ENCODE measurements at regions of chr1 and their contacts with region 1.

Region 1: DNA sequence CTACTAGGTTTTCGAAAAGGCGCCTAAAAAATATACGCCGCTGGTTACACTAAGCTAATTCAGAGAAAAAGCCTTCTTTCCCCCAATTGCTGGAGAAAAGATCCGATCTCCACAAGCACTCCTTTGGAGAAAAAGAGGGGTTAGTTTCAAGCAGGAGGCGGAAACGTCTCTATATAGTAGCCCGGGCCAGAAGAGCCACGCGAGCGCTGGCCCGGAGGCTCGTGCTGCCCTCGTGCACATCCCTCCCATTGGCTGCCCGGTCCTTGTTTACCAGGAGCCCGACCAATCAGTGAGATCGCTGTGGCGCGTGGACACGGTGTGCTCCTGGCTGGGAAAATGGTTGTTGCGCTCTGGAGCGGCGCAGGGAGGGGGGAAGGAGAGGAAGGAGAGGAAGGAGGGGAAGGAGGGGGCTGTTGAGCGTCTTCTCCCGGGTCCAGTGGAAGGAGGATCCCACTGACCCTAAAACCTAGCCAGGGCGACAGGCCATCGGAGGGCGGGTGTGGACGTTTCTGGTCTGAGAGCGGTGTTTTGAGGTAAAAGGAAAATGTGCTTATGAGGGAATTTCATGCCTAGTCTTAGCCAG is at the start of gene TXNIP:
- DNase-seq: peak; percentile 86 to 96 (median 89)
- H3K4me3 ChIP-seq: peak within 1 kb of the TSS; percentile 99
- H3K4me3 Mint-ChIP-seq: peak within 1 kb of the TSS; percentile 94 to 99 (median 99)
- H3K27ac ChIP-seq: peak within 1 kb of the TSS; percentile 92
- H3K27ac Mint-ChIP-seq: peak within 1 kb of the TSS; percentile 84 to 98 (median 98)
- H3K4me1 ChIP-seq: peaks cover 58% of the 10 kb centered on the region
- H3K4me1 Mint-ChIP-seq: peaks cover 57 to 67% (median 63%) of the 10 kb centered on the region in 3 donors
- H3K27me3 ChIP-seq: no peaks in the 10 kb centered on the region
- H3K27me3 Mint-ChIP-seq: peaks cover 0 to 3% of the 10 kb centered on the region in 2 donors
- total RNA-seq, gene TXNIP: 167 to 170 TPM

Region 2: DNA sequence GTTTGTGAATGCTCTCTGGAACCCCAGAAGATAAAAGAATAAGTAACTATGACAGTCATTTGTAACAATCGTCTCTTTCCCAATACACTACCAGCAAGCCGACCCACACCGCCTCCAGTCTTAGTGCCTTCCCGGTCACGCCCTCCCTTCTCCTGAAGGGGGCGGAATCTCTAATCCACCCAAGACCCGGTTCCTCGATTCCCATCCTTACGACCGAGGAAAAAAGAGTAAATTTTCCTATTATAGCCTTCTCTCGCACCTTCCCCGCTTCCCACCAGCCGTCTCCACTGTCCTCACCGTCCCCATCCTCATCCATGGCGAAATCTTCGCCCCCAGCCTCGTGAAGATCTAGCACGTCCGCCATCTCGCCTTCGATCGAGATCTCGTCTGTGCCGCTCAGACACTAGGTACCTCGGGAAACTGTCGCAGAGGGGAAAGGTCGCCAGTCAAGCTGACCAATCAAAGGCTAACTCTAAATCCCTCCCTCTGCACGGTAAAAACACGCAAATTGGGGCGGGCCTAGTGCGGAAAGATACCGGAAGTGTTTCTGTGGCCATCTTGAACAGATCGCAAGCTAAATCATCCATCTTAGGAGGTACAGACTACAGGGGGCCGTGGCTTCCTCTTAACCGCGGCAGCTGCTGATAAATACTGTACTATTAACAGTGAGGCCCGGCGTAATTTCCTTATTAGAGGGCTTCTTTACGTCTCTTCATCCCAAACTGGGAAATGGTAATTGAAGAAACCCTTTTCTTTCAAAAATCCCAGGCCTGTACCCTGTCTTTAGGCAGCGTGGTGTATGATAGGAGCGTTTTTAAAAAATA is 69.2 kb before region 1 on chr1 and contains the start of gene RBM8A:
- CTCF ChIA-PET with region 1: interaction called, 8 read pairs
- POLR2A ChIA-PET with region 1: interaction called, 13 read pairs
- DNase-seq: peak; percentile 85 to 97 (median 96)
- H3K4me3 ChIP-seq: peak within 1 kb of the TSS; percentile 89
- H3K4me3 Mint-ChIP-seq: peak within 1 kb of the TSS in 3 of 7 donors; percentile 47 to 84 (median 57)
- H3K27ac ChIP-seq: peak within 1 kb of the TSS; percentile 93
- H3K27ac Mint-ChIP-seq: peak within 1 kb of the TSS in 4 of 8 donors; percentile 74 to 92 (median 82)
- H3K4me1 ChIP-seq: peaks cover 29% of the 10 kb centered on the region
- H3K4me1 Mint-ChIP-seq: peaks cover 10 to 22% (median 20%) of the 10 kb centered on the region in 3 donors
- H3K27me3 ChIP-seq: no peaks in the 10 kb centered on the region
- H3K27me3 Mint-ChIP-seq: no peaks in the 10 kb centered on the region
- total RNA-seq, gene RBM8A: 387 to 397 TPM

Region 3: DNA sequence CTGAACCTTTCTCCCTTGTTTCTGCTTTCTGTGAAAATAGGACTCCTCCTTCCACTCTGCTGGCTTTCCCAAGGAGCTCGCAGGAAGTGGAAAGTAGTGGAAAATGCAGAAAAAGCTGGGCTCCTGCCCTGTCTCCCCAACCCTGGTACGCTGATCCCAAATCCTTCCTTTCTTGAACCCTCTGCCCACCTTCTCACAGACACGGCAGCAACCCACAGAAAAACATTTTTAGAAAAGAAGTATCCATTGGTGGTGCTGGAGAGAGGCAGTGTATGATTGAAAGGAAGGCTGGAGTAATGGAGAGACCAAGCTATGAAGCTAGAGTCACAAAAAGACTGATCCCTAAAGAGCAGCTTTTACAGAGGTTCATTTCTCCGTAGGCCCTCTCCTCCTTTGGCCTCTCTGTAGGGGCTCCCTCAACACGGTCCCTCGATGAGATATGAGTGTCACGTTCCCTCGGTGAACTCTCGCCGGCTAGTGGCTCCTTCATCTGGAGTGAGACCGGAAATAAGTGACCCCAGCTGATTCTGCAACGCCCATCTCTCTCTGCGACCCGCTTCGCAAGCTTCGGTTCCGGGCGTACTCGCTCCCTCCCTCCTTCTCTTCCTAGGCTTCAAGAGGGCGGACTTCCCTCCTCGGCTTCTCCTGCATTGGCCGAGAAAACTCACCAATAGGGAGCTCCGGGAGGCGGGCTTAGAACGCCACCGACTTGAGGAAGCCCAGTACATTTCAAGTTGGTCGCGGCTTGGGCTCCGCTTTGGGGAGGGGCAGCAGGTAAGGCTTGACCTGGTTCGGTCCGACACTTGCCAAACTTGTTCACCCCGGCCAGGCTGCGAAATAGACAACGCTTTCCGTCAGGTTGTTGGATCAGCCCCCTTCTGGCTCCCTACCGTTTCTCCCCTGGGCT is 32.3 kb before region 1 on chr1 and contains the starts of genes ANKRD34A and POLR3GL:
- CTCF ChIA-PET with region 1: interaction called, 3 read pairs
- POLR2A ChIA-PET with region 1: interaction called, 19 read pairs
- DNase-seq: peak; percentile 84 to 95 (median 90)
- H3K4me3 ChIP-seq: peak within 1 kb of the TSS; percentile 88
- H3K4me3 Mint-ChIP-seq: peak within 1 kb of the TSS; percentile 93 to 98 (median 96)
- H3K27ac ChIP-seq: peak within 1 kb of the TSS; percentile 71
- H3K27ac Mint-ChIP-seq: peak within 1 kb of the TSS; percentile 84 to 99 (median 96)
- H3K4me1 ChIP-seq: peaks cover 46% of the 10 kb centered on the region
- H3K4me1 Mint-ChIP-seq: peaks cover 51 to 72% (median 53%) of the 10 kb centered on the region in 3 donors
- H3K27me3 ChIP-seq: no peaks in the 10 kb centered on the region
- H3K27me3 Mint-ChIP-seq: peaks cover 0 to 3% of the 10 kb centered on the region in 2 donors
- total RNA-seq, gene ANKRD34A: 6.9 to 8.7 TPM
- total RNA-seq, gene POLR3GL: 21.6 to 22.8 TPM

Region 4: DNA sequence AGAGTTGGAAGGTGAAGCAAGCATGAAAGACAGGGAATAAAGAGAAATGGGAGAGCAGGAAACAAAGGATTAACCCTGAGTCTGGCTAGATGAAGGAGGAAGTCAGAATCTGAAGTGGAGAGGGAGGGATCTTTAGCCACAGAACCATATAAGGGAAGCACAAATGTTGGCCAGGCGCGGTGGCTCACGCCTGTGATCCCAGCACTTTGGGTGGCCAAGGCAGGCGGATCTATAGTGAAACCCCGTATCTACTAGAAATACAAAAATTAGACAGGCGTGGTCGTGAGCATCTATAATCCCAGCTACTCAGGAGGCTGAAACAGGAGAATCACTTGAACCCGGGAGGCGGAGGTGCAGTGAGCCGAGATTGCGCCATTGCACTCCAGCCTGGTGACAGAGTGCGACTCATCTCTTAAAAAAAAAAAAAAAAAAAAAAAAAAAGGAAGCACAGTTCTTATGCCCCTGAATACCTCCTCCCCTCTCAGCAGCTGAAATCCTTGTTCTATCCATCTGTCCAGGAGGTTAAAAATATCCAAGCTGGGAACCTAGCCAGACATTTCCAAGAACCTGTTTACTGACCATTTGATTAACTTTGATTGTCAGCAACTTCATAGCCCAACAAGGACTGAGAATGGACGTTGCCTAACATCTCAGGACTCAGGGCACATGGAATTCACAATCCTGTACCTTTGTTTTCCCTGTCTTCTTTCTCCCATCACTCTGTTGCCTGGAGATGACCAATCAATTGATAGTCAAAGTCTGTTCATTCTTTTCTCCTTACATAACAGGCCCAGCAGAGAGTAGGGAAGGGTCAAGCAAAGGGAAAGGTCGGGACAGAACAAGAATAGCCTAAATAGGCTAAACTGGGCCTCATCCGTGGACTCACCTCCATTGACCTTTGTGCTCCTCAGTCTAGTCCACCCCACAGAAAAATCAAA is 10.8 kb before region 1 on chr1:
- CTCF ChIA-PET with region 1: interaction called, 475 read pairs
- POLR2A ChIA-PET with region 1: interaction called, 229 read pairs
- DNase-seq: no peak
- H3K4me3 ChIP-seq: no peak overlapping the region
- H3K4me3 Mint-ChIP-seq: peak overlapping the region in 6 of 7 donors; percentile 49 to 80 (median 71)
- H3K27ac ChIP-seq: peak overlapping the region; percentile 46
- H3K27ac Mint-ChIP-seq: peak overlapping the region; percentile 86 to 99 (median 94)
- H3K4me1 ChIP-seq: peaks cover 78% of the 10 kb centered on the region
- H3K4me1 Mint-ChIP-seq: peaks cover 28 to 70% (median 29%) of the 10 kb centered on the region in 3 donors
- H3K27me3 ChIP-seq: no peaks in the 10 kb centered on the region
- H3K27me3 Mint-ChIP-seq: no peaks in the 10 kb centered on the region

Region 5: DNA sequence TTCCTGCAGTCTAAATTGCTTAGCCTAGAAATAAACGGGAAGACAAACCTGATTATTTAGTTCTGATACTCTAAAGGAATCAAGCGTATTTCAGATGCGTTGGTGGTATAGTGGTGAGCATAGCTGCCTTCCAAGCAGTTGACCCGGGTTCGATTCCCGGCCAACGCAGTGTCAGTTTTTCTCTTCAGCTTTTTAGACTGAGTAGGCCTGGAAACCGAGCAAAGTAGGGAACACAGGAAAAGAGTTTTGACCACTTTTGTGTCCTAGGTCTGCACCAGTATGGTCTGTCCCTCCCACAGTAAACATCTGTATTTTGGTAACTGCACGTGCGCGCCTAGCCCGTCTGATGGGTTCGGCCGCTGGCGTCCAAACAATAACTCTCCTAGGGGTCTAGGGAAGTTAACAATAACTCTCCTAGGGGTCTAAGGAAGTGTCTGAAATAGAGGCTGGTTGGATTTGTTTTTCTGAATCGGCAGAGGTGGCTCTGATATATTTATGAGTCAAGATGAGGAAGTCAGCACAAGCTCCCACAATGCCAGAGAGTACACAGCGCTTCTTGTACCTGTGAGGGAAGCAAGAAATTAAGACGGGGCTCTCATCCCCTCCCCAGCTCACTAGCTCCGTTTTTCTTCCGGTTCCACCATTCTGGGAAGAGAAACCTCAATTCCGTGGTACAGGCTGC is 40.6 kb after region 1 on chr1:
- CTCF ChIA-PET with region 1: interaction called, 4 read pairs
- POLR2A ChIA-PET with region 1: interaction called, 11 read pairs
- DNase-seq: peak; percentile 48 to 82 (median 79)
- H3K4me3 ChIP-seq: peak overlapping the region; percentile 88
- H3K4me3 Mint-ChIP-seq: peak overlapping the region; percentile 93 to 99 (median 97)
- H3K27ac ChIP-seq: peak overlapping the region; percentile 64
- H3K27ac Mint-ChIP-seq: peak overlapping the region; percentile 94 to 98 (median 96)
- H3K4me1 ChIP-seq: peaks cover 10% of the 10 kb centered on the region
- H3K4me1 Mint-ChIP-seq: peaks cover 37 to 52% (median 43%) of the 10 kb centered on the region in 3 donors
- H3K27me3 ChIP-seq: no peaks in the 10 kb centered on the region
- H3K27me3 Mint-ChIP-seq: peaks cover 3 to 24% of the 10 kb centered on the region in 2 donors